CD4-positive, alpha-beta T cell (primary cell): ENCODE measurements at regions of chr20 and their contacts with region 1.

Region 1: DNA sequence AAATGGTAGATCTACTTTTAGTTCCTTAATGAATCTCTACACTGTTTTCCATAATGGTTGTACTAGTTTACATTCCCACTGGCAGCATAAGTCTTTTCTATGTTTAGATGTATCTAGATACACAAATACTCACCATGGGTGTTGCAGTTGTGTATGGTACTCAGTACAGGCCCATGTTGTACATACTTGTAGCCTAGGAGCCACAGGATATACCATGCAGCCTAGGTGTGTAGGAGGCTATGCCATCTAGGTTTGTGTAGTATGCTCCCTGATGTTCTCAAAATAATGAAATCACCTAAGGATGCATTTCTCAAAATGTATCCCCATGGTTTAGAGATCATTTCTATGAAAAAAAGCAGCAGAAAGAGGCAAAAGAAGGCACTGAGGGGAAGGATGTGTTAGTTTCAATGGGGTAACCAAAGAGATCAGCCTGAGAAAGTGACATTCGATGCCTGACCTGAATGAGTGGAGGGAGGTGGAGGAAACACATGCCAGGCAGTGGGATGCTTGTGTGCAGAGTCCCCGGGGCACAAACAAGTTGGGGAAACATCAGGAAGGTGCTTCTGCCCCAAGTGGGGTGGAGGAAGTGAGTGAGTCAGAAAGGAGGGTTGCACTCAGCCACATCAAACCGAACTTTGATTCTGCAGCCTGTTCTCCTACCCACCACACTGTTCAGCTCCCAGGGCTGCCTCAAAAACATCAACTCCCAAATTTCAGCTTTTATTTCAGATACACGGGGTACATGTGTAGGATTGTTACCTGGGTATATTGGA is 191.2 kb downstream of the ZNF217 start:
- DNase-seq: peak in 12 of 14 experiments; percentile 3 to 60 (median 30)
- ATAC-seq: peak; percentile 93
- H3K4me3 ChIP-seq: no peak overlapping the region
- H3K4me3 Mint-ChIP-seq: no peak overlapping the region
- H3K27ac ChIP-seq: no peak overlapping the region
- H3K27ac Mint-ChIP-seq: peak overlapping the region; percentile 22
- H3K4me1 ChIP-seq: peaks cover 6% of the 10 kb centered on the region
- H3K4me1 Mint-ChIP-seq: peaks cover 64% of the 10 kb centered on the region
- H3K27me3 ChIP-seq: no peaks in the 10 kb centered on the region
- H3K27me3 Mint-ChIP-seq: no peaks in the 10 kb centered on the region
- CTCF ChIP-seq: no peak

Region 2: DNA sequence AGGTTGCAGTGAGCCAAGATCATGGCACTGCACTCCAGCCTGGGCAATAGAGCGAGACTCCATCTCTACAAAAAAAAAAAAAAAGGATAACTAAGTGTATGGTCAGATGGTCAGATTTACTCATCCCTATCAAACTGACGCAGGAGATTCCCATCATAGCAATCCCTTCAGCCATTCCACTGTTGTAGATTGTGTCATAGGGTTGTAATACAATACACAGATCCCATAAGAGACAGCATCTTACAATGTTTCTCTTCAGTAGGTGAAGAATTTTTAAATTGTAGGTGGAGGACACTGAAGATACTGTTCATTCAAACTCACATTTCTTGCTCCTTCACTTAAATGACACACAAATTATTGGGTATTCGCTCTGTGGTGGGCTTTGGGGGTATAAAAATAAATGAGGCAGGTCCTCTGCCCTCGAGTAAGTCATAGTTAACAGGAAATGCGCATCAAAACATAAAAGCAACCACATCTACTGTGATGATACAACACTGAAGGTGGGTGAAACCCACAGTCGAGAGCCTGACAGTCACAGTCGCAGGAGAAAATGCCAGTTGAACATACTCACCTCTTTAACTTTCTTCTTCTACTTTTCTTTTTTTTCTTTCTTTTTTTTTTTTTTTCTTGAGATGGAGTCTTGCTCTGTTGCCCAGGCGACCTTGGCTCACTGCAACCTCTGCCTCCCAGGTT is 14.3 kb before region 1 on chr20:
- CTCF ChIA-PET with region 1: no interaction called
- POLR2A ChIA-PET with region 1: no interaction called
- intact Hi-C with region 1: loop called in 1 of 2 experiments (anchors 1 kb)
- DNase-seq: peak in 11 of 14 experiments; percentile 2 to 70 (median 35)
- ATAC-seq: peak; percentile 96
- H3K4me3 ChIP-seq: no peak overlapping the region
- H3K4me3 Mint-ChIP-seq: peak overlapping the region; percentile 17
- H3K27ac ChIP-seq: no peak overlapping the region
- H3K27ac Mint-ChIP-seq: peak overlapping the region; percentile 71
- H3K4me1 ChIP-seq: peaks cover 7% of the 10 kb centered on the region
- H3K4me1 Mint-ChIP-seq: peaks cover 43% of the 10 kb centered on the region
- H3K27me3 ChIP-seq: no peaks in the 10 kb centered on the region
- H3K27me3 Mint-ChIP-seq: no peaks in the 10 kb centered on the region
- CTCF ChIP-seq: no peak